ENCODE measurements at regions of chr1 and their contacts with region 1.

Region 1: GRCh38 chr1:240455228-240455821 is 156.6 kb downstream of the GREM2 start:
- H3K4me3 ChIP-seq: no peak overlapping the region
- H3K27ac ChIP-seq: no peak overlapping the region
- H3K4me1 ChIP-seq: peaks cover 3% of the 10 kb centered on the region; the same call in 1 of the 2 replicates
- CTCF ChIP-seq: peak; percentile 55

Region 2: DNA sequence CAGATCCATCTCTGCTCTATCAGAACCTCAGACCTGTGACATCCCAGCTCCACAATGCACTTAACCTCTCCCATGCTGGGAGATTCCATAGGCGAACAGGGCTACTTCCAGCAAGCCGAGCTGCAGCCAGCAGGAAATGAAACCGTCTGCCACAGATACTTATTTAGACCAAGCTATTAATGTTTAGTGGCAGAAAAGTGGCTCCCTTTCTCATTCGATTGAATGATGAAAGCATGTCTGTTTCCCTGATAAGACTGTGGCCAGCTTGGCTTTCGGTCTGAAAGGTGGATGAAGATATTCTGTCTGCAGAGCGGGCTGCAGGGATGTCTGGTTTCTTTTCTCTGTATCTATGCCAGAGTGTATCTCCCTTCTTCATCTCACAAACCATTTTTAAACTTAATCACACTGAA is 10.2 kb after region 1 on chr1:
- CTCF ChIA-PET with region 1: interaction called, 25 read pairs
- POLR2A ChIA-PET with region 1: no interaction called
- H3K4me3 ChIP-seq: no peak overlapping the region
- H3K27ac ChIP-seq: no peak overlapping the region
- H3K4me1 ChIP-seq: peaks cover 32% of the 10 kb centered on the region
- CTCF ChIP-seq: no peak

Region 3: DNA sequence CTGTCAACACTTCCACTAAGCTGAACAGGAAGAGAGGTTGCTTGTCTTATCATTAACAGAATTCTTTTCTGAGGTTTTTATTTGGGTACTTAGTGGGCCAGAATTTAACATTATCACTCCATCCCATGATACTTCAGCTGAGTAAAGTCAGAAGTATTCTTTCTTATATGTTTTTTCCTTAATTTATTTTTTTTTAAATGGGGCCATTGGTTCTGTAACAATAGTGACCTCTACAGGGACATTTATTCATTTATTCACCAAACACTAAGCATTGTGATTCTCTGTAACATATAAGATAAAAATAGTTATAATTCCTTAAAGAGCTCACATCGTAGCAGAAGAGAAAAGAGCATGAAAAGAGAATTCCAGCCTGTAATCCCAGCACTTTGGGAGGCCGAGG is 146.9 kb after region 1 on chr1:
- CTCF ChIA-PET with region 1: interaction called, 16 read pairs
- POLR2A ChIA-PET with region 1: no interaction called
- H3K4me3 ChIP-seq: no peak overlapping the region
- H3K27ac ChIP-seq: no peak overlapping the region
- H3K4me1 ChIP-seq: peaks cover 1% of the 10 kb centered on the region; the same call in 1 of the 2 replicates
- CTCF ChIP-seq: 0 out of 2 replicates have a peak, but pooled peaks have one; percentile 10

Region 4: GRCh38 chr1:240608707-240609106 is 153.4 kb after region 1 on chr1:
- CTCF ChIA-PET with region 1: interaction called, 22 read pairs
- POLR2A ChIA-PET with region 1: interaction called, 5 read pairs
- H3K4me3 ChIP-seq: no peak overlapping the region
- H3K27ac ChIP-seq: no peak overlapping the region
- H3K4me1 ChIP-seq: peaks cover 21% of the 10 kb centered on the region
- CTCF ChIP-seq: peak; percentile 47

Region 5: GRCh38 chr1:240691521-240692338 is 236.4 kb after region 1 on chr1:
- CTCF ChIA-PET with region 1: interaction called, 65 read pairs
- POLR2A ChIA-PET with region 1: no interaction called
- H3K4me3 ChIP-seq: no peak overlapping the region
- H3K27ac ChIP-seq: no peak overlapping the region
- H3K4me1 ChIP-seq: no peaks in the 10 kb centered on the region
- CTCF ChIP-seq: peak; percentile 97